A673 (cell line): ENCODE measurements at regions of chr16 and their contacts with region 1.

Region 1: DNA sequence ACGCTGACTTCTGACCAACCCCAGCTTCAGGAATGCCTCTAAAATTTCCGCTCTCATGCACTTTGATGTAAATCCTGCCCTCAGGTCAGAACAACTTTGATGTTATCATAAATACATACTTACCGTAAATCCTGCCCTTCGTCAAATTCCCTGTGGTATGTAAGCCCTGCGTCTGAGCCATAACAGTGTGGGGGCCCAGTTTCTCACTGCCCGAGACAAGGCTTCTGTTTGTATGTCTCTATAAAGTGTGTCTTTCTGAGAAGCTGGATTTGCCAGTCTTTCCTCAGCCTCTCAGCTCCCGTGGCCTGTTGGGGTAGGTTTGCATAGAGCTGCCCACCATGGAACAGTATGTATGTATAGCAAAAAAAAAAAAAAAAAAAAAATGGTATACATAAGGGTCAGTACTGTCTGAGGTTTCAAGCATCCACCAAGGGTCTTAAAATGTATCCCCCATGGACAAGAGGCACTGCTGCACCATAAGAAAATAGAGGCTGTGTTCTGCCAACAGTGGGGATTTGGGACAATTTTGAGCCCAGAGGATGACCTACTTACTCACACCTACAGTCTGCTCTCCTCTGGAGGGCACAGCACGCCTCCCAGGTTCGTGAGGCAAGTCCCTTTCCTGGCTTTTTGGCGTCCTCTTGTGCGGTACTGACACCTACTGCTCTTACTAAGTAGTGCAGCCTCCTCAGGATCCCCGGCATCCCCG is 17.5 kb downstream of the PRMT7 start:
- DNase-seq: peak; percentile 94
- H3K4me3 ChIP-seq: no peak overlapping the region
- H3K27ac ChIP-seq: no peak overlapping the region
- H3K4me1 ChIP-seq: peaks cover 17% of the 10 kb centered on the region
- H3K27me3 ChIP-seq: no peaks in the 10 kb centered on the region
- CTCF ChIP-seq: peak; percentile 90

Region 2: DNA sequence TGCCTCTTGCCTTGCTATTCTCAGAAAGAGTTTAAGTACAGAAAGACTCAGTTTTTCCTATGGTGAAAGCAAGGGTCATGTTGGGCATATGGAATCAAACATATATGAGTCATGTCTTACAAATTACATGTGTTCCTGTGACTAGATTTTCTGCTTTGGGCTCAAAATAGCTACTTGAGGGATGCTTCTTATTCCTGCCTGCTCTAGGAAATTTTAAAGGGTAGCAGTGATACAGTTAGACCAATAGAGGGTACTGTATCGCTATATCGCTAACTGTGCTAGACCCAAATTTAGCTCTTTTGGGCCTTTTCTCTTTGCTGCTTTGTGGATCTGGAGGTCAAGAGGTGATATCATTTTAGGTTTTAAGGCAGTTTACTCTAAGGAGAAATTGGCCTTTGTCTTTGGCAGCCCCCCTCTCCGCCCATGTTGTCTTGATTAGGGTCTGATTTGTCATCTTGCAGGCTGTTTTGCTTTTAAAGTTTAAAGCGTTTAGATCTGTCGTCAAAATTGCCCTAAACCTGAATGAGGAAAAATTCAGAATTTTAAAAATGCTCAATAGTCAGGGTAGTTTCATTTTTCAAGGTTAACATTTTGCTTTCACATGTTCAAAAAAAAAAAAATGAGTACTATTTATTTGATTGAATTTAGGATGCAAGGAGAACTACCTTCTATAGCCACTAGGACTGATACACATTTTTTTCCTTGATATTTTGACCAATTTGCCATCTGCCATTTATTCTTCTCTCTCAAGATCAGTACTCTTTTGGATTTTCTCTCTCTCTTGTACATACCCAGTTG is 234.3 kb before region 1 on chr16:
- CTCF ChIA-PET with region 1: no interaction called
- POLR2A ChIA-PET with region 1: no interaction called
- intact Hi-C with region 1: loop called (anchors 10 kb)
- DNase-seq: peak; percentile 42
- H3K4me3 ChIP-seq: no peak overlapping the region
- H3K27ac ChIP-seq: no peak overlapping the region
- H3K4me1 ChIP-seq: peaks cover 26% of the 10 kb centered on the region
- H3K27me3 ChIP-seq: no peaks in the 10 kb centered on the region
- CTCF ChIP-seq: peak; percentile 62

Region 3: GRCh38 chr16:68146585-68146984 is 181.7 kb before region 1 on chr16:
- CTCF ChIA-PET with region 1: no interaction called
- POLR2A ChIA-PET with region 1: interaction called, 13 read pairs
- intact Hi-C with region 1: no loop called
- DNase-seq: peak; percentile 14
- H3K4me3 ChIP-seq: no peak overlapping the region
- H3K27ac ChIP-seq: no peak overlapping the region
- H3K4me1 ChIP-seq: no peaks in the 10 kb centered on the region
- H3K27me3 ChIP-seq: no peaks in the 10 kb centered on the region
- CTCF ChIP-seq: no peak

Region 4: GRCh38 chr16:68244903-68245853 is 83.1 kb before region 1 on chr16 and contains the start of gene PLA2G15:
- CTCF ChIA-PET with region 1: no interaction called
- POLR2A ChIA-PET with region 1: no interaction called
- intact Hi-C with region 1: loop called (anchors 2 kb)
- DNase-seq: peak; percentile 94
- H3K4me3 ChIP-seq: peak within 1 kb of the TSS; percentile 89
- H3K27ac ChIP-seq: peak within 1 kb of the TSS; percentile 33
- H3K4me1 ChIP-seq: peaks cover 6% of the 10 kb centered on the region
- H3K27me3 ChIP-seq: no peaks in the 10 kb centered on the region
- CTCF ChIP-seq: no peak
- total RNA-seq, gene PLA2G15: 6.8 and 8.1 TPM in 2 replicates

Region 5: DNA sequence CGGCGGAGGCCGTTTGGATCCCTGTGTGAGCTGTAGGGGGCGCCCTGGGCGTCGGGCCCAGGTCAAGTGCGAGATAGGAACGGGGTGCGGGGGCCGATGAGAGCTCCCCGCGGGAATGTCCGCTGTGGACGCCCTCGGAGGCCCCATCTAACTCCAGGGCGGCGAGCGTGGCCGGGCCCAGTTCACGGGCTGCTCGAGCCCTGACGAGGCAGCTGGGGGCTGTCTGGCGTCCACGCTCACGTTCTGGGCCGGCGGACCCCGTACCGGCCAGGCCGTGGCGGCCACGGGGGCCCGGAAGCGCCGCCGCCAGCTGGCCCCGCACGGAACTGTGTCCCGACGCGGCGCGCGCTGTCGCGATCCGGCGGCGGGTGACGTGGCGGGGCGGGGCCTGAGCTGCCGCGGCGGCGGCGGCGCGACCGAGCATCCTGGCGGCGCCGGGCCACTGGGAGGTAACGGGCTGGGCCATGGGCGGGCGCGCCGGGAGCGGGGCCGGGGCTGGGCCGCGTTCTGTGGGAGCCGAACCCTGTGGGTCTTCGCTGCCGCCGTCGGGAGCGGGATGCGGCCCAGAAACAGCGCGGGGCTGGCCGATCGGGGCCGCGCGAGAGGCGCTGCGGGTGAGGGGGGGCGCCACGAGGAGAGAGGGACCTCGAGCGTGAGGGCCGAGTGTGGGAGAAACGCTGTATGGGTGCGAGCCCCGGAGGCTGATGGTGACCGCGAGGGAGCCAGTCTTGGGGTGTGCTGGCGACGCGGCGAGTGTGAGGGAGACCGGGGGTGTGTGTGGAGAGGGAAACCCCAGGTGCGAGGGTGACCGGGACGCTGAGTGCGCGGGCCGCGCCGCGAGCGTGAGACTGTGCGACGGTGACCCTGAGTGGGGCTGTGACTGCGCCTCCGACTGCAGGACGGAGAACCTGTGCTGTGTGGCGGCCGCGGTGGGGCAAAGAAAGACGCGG is 63.9 kb before region 1 on chr16 and contains the start of gene SLC7A6:
- CTCF ChIA-PET with region 1: interaction called, 4 read pairs
- POLR2A ChIA-PET with region 1: no interaction called
- intact Hi-C with region 1: loop called (anchors 2 kb)
- DNase-seq: peak; percentile 82
- H3K4me3 ChIP-seq: peak within 1 kb of the TSS; percentile 89
- H3K27ac ChIP-seq: peak within 1 kb of the TSS; percentile 93
- H3K4me1 ChIP-seq: peaks cover 11% of the 10 kb centered on the region
- H3K27me3 ChIP-seq: no peaks in the 10 kb centered on the region
- CTCF ChIP-seq: peak; percentile 79
- total RNA-seq, gene SLC7A6: 43.6 and 58.7 TPM in 2 replicates